ENCODE measurements at regions of chrX and their contacts with region 1.

Region 1: DNA sequence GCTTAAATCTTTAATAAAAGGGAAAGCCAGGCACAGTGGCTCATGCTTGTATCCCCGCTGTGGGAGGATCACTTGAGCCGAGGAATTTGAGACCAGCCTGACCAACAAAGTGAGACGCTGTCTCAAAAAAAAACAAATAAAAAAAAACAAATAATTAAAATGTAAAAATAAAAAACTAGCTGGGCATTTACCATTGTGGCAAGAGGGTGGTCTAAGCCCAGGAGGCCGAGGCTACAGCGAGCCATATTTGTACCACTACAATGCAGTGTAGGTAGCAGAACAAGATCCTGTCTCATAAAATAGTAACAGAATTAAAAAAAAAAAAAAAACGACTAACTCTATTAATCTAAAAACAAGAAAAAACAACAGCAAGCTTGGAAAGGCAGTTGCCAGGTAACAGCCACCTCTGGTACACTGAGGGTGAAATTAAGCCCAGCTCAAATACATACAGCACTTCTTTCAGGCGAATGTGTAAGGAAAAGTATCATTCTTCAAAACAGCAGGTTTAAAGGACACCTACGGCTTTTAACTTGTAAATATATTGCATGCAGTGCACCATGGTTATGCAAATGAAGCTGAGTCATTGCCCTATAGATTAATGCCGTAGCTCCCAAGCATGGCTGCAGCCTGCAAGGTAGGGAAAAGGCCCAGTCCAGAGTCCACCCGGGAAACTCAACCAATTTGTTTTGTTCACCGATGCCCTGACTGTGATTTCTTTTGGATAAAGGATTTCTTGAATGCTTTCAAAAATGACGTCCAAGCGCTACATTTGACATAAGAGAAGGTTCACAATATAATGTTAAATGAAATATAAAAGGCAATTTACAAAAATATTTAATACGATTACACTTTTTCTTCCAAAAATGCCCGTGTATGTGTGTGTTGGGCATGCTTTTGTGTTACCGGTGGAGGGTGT is 14.5 kb upstream of the TXLNG start:
- DNase-seq: no peak
- H3K4me3 ChIP-seq: no peak overlapping the region
- H3K27ac ChIP-seq: no peak overlapping the region
- H3K4me1 ChIP-seq: no peaks in the 10 kb centered on the region
- H3K27me3 ChIP-seq: no peaks in the 10 kb centered on the region
- CTCF ChIP-seq: no peak
- EP300 ChIP-seq: no peak
- POLR2A ChIP-seq: no peak

Region 2: DNA sequence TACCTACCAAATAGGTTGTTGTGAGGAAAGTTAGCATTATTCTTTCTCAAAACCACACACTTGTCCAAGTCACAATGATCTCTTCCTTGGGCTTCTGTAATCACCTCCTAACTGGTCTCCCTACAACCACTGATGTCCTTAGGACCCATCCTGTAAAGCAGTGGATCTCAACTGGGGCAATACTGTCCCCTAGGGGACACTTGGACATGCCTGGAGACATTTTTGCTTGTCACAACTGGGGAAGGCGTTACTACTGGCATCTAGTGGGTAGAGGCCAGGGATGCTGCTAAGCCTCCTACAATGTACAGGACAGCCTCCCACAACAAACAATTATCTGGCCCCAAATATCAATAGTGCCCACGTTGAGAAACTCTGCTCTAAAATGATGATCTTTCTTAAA is 798.4 kb before region 1 on chrX:
- intact Hi-C with region 1: no loop called
- DNase-seq: no peak
- H3K4me3 ChIP-seq: no peak overlapping the region
- H3K27ac ChIP-seq: no peak overlapping the region
- H3K4me1 ChIP-seq: no peaks in the 10 kb centered on the region
- H3K27me3 ChIP-seq: no peaks in the 10 kb centered on the region
- CTCF ChIP-seq: no peak
- EP300 ChIP-seq: no peak
- POLR2A ChIP-seq: no peak

Region 3: GRCh38 chrX:16394290-16394689 is 377.5 kb before region 1 on chrX:
- intact Hi-C with region 1: no loop called
- DNase-seq: no peak
- H3K4me3 ChIP-seq: no peak overlapping the region
- H3K27ac ChIP-seq: no peak overlapping the region
- H3K4me1 ChIP-seq: no peaks in the 10 kb centered on the region
- H3K27me3 ChIP-seq: no peaks in the 10 kb centered on the region
- CTCF ChIP-seq: no peak
- EP300 ChIP-seq: no peak
- POLR2A ChIP-seq: no peak

Region 4: GRCh38 chrX:16727637-16728036 is 44.1 kb before region 1 on chrX:
- intact Hi-C with region 1: loop called (anchors 2 kb)
- DNase-seq: no peak
- H3K4me3 ChIP-seq: no peak overlapping the region
- H3K27ac ChIP-seq: no peak overlapping the region
- H3K4me1 ChIP-seq: peaks cover 0 to 4% (median 0%) of the 10 kb centered on the region in 4 donors
- H3K27me3 ChIP-seq: no peaks in the 10 kb centered on the region
- CTCF ChIP-seq: no peak
- EP300 ChIP-seq: no peak
- POLR2A ChIP-seq: no peak

Region 5: GRCh38 chrX:17032351-17032750 is 260.6 kb after region 1 on chrX:
- intact Hi-C with region 1: no loop called
- DNase-seq: no peak
- H3K4me3 ChIP-seq: no peak overlapping the region
- H3K27ac ChIP-seq: peak overlapping the region; percentile 1 to 67 (median 61)
- H3K4me1 ChIP-seq: peaks cover 0 to 35% (median 8%) of the 10 kb centered on the region in 4 donors
- H3K27me3 ChIP-seq: no peaks in the 10 kb centered on the region
- CTCF ChIP-seq: no peak
- EP300 ChIP-seq: peak in 1 of 4 donors; percentile 27
- POLR2A ChIP-seq: no peak

Measured in sigmoid colon (tissue), 7 donors.